ENCODE measurements at regions of chr1 and their contacts with region 1.

Region 1: GRCh38 chr1:61056573-61057439 is 25.6 kb upstream of the NFIA start:
- DNase-seq: peak; percentile 38
- ATAC-seq: peak; percentile 66
- H3K4me3 ChIP-seq: peak overlapping the region; percentile 53
- H3K27ac ChIP-seq: no peak overlapping the region
- H3K4me1 ChIP-seq: no peaks in the 10 kb centered on the region; the same call in 1 of the 2 replicates
- H3K27me3 ChIP-seq: peaks cover 33% of the 10 kb centered on the region
- CTCF ChIP-seq: no peak
- POLR2A ChIP-seq: no peak
- RAD21 ChIP-seq: no peak

Region 2: GRCh38 chr1:61028136-61028535 is 28.7 kb before region 1 on chr1:
- CTCF ChIA-PET with region 1: no interaction called
- POLR2A ChIA-PET with region 1: no interaction called
- dilution Hi-C with region 1: no loop called
- in situ Hi-C with region 1: no loop called
- intact Hi-C with region 1: no loop called
- DNase-seq: no peak
- ATAC-seq: no peak
- H3K4me3 ChIP-seq: no peak overlapping the region
- H3K27ac ChIP-seq: no peak overlapping the region
- H3K4me1 ChIP-seq: no peaks in the 10 kb centered on the region
- H3K27me3 ChIP-seq: no peaks in the 10 kb centered on the region
- CTCF ChIP-seq: no peak
- POLR2A ChIP-seq: no peak
- RAD21 ChIP-seq: no peak

Region 3: GRCh38 chr1:61253059-61253735 is 196.4 kb after region 1 on chr1:
- CTCF ChIA-PET with region 1: no interaction called
- POLR2A ChIA-PET with region 1: no interaction called
- dilution Hi-C with region 1: no loop called
- in situ Hi-C with region 1: no loop called
- intact Hi-C with region 1: loop called (anchors 5 kb)
- DNase-seq: peak; percentile 17
- ATAC-seq: no peak
- H3K4me3 ChIP-seq: no peak overlapping the region
- H3K27ac ChIP-seq: no peak overlapping the region
- H3K4me1 ChIP-seq: peaks cover 2% of the 10 kb centered on the region; the same call in 1 of the 2 replicates
- H3K27me3 ChIP-seq: no peaks in the 10 kb centered on the region
- CTCF ChIP-seq: no peak
- POLR2A ChIP-seq: no peak
- RAD21 ChIP-seq: no peak

Measured in IMR-90 (cell line).